ENCODE measurements at regions of chr15 and their contacts with region 1.

Region 1: GRCh38 chr15:88012233-88012632 is 244.3 kb downstream of the NTRK3 start:
- DNase-seq: no peak

Region 2: DNA sequence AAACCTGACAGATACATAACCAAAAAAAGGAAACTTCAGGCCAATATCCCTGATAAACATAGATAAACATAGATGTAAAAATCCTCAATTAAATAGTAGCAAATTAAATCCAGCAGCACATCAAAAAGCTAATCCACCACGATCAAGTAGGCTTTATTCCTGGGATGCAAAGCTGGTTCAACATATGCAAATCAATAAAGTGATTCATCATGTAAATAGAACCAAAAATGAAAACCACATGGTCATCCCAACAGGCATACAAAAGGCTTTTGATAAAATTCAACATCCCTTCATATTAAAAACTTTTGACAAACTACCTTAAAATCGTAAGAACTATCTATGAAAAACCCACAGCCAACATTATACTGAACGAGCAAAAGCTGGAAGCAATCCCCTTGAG is 637.9 kb before region 1 on chr15:
- intact Hi-C with region 1: loop called in 1 of 2 experiments (anchors 5 kb)
- DNase-seq: no peak

Measured in posterior vena cava (tissue), 2 donors.